ENCODE measurements at regions of chr11 and their contacts with region 1.

Region 1: GRCh38 chr11:74702383-74703007 is 28.7 kb downstream of the CHRDL2 start:
- DNase-seq: peak; percentile 75 to 84
- ATAC-seq: peak; percentile 84 to 90
- H3K4me3 ChIP-seq: no peak overlapping the region
- H3K27ac ChIP-seq: peak overlapping the region; percentile 53 to 88; a peak in 5 of 6 replicates
- H3K4me1 ChIP-seq: peaks cover 21% of the 10 kb centered on the region
- CTCF ChIP-seq: peak; percentile 79
- EP300 ChIP-seq: no peak
- POLR2A ChIP-seq: no peak
- RAD21 ChIP-seq: peak; percentile 53 to 67

Region 2: GRCh38 chr11:74634537-74634936 is 68.0 kb before region 1 on chr11:
- CTCF ChIA-PET with region 1: interaction called, 46 read pairs
- POLR2A ChIA-PET with region 1: no interaction called
- DNase-seq: peak; percentile 33 to 80
- ATAC-seq: peak; percentile 93 to 94
- H3K4me3 ChIP-seq: no peak overlapping the region
- H3K27ac ChIP-seq: peak overlapping the region; percentile 61 to 63
- H3K4me1 ChIP-seq: peaks cover 52% of the 10 kb centered on the region
- CTCF ChIP-seq: peak; percentile 61
- EP300 ChIP-seq: no peak
- POLR2A ChIP-seq: no peak
- RAD21 ChIP-seq: peak; percentile 69

Region 3: GRCh38 chr11:74647404-74647803 is 55.1 kb before region 1 on chr11:
- CTCF ChIA-PET with region 1: interaction called, 10 read pairs
- POLR2A ChIA-PET with region 1: no interaction called
- DNase-seq: no peak
- ATAC-seq: no peak
- H3K4me3 ChIP-seq: no peak overlapping the region
- H3K27ac ChIP-seq: no peak overlapping the region
- H3K4me1 ChIP-seq: no peaks in the 10 kb centered on the region
- CTCF ChIP-seq: no peak
- EP300 ChIP-seq: no peak
- POLR2A ChIP-seq: no peak
- RAD21 ChIP-seq: no peak

Region 4: DNA sequence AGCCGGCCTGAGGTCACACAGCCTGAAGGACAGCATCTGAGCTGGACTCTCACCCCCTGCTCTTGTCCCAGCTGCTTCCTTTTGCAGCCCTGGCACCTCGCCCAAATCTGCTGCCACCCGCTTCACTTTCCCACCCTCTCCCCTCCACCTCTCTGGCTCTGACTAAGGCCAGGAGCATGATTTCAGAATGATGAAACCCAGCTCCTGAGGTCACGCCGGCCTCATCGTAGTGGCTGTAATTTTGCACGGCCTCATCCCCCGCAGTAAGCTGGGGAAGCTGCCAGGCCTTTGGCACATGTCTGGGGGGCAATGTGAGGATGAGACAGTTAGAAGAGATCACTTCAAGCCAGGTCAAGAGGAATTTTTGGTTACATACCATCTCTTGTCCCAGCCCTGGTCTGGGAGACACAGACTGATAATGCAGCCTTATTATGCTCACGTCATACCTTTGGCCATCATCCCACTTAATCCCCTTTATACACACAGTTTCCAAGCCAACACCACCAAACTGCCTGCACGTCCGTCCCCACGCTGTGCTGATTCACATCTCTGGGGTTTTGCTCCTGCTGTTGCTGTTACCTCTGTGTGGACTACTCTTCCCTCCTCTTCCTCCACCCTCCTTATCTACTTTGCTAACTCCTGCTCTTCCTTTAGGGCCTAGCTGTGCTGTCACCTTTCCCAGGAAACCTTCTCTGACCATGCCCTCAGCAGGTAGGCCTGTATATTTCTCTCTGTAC is 29.4 kb before region 1 on chr11:
- CTCF ChIA-PET with region 1: interaction called, 281 read pairs
- POLR2A ChIA-PET with region 1: interaction called, 4 read pairs
- DNase-seq: peak; percentile 86 to 98
- ATAC-seq: peak; percentile 90 to 91
- H3K4me3 ChIP-seq: no peak overlapping the region
- H3K27ac ChIP-seq: peak overlapping the region; percentile 98 to 100
- H3K4me1 ChIP-seq: peaks cover 45% of the 10 kb centered on the region
- CTCF ChIP-seq: no peak
- EP300 ChIP-seq: peak; percentile 90 to 97
- POLR2A ChIP-seq: no peak
- RAD21 ChIP-seq: peak in 1 of 2 experiments; percentile 42; a peak in 4 of 5 replicates

Region 5: GRCh38 chr11:74717221-74717969 is 14.9 kb after region 1 on chr11:
- CTCF ChIA-PET with region 1: interaction called, 241 read pairs
- POLR2A ChIA-PET with region 1: no interaction called
- DNase-seq: no peak
- ATAC-seq: no peak
- H3K4me3 ChIP-seq: no peak overlapping the region
- H3K27ac ChIP-seq: peak overlapping the region in 1 of 2 experiments; percentile 10; a peak in 1 of 6 replicates
- H3K4me1 ChIP-seq: no peaks in the 10 kb centered on the region
- CTCF ChIP-seq: no peak
- EP300 ChIP-seq: no peak
- POLR2A ChIP-seq: no peak
- RAD21 ChIP-seq: no peak

Region 6: GRCh38 chr11:74895340-74896116 is 193.0 kb after region 1 on chr11:
- CTCF ChIA-PET with region 1: no interaction called
- POLR2A ChIA-PET with region 1: no interaction called
- DNase-seq: no peak
- ATAC-seq: peak in 1 of 2 experiments; percentile 19; a peak in 1 of 6 replicates
- H3K4me3 ChIP-seq: no peak overlapping the region
- H3K27ac ChIP-seq: no peak overlapping the region
- H3K4me1 ChIP-seq: no peaks in the 10 kb centered on the region
- CTCF ChIP-seq: no peak
- EP300 ChIP-seq: no peak
- POLR2A ChIP-seq: no peak
- RAD21 ChIP-seq: no peak

Region 7: GRCh38 chr11:75013051-75013450 is 310.6 kb after region 1 on chr11:
- CTCF ChIA-PET with region 1: no interaction called
- POLR2A ChIA-PET with region 1: no interaction called
- DNase-seq: peak in 1 of 2 experiments; percentile 24
- ATAC-seq: no peak
- H3K4me3 ChIP-seq: no peak overlapping the region
- H3K27ac ChIP-seq: no peak overlapping the region
- H3K4me1 ChIP-seq: peaks cover 3% of the 10 kb centered on the region; the same call in 1 of the 3 replicates
- CTCF ChIP-seq: no peak
- EP300 ChIP-seq: no peak
- POLR2A ChIP-seq: no peak
- RAD21 ChIP-seq: no peak

Measured in A549 (cell line).